ENCODE measurements at regions of chr19 and their contacts with region 1.

Region 1: GRCh38 chr19:55467236-55468053 is 2.9 kb upstream of the C19orf85 start:
- DNase-seq: peak in 1 of 2 experiments; percentile 94
- H3K4me3 ChIP-seq: no peak overlapping the region
- H3K27ac ChIP-seq: no peak overlapping the region
- H3K4me1 ChIP-seq: peaks cover 3 to 23% (median 11%) of the 10 kb centered on the region in 4 experiments
- H3K27me3 ChIP-seq: no peaks in the 10 kb centered on the region; a peak in 1 of 7 replicates
- CTCF ChIP-seq: peak; percentile 87 to 93 (median 89)
- EP300 ChIP-seq: peak in 1 of 2 experiments; percentile 63; a peak in 1 of 3 replicates
- POLR2A ChIP-seq: no peak
- RAD21 ChIP-seq: peak; percentile 56 to 73

Region 2: GRCh38 chr19:55484593-55485438 is 17.4 kb after region 1 on chr19 and contains the start of gene NAT14:
- CTCF ChIA-PET with region 1: interaction called, 31 read pairs
- POLR2A ChIA-PET with region 1: interaction called, 57 read pairs
- DNase-seq: peak; percentile 68 to 97
- H3K4me3 ChIP-seq: peak within 1 kb of the TSS; percentile 46 to 88 (median 76)
- H3K27ac ChIP-seq: peak within 1 kb of the TSS; percentile 69; the same call in 1 of the 2 replicates
- H3K4me1 ChIP-seq: peaks cover 0 to 50% (median 36%) of the 10 kb centered on the region in 4 experiments; a peak in 6 of 7 replicates
- H3K27me3 ChIP-seq: no peaks in the 10 kb centered on the region
- CTCF ChIP-seq: no peak
- EP300 ChIP-seq: peak in 1 of 2 experiments; percentile 50; a peak in 1 of 3 replicates
- POLR2A ChIP-seq: peak in 1 of 2 experiments; percentile 55; a peak in 2 of 3 replicates
- RAD21 ChIP-seq: no peak
- total RNA-seq, gene NAT14: 69.1 and 71.2 TPM in 2 replicates

Region 3: GRCh38 chr19:55494172-55494761 is 26.8 kb after region 1 on chr19:
- CTCF ChIA-PET with region 1: interaction called, 10 read pairs
- POLR2A ChIA-PET with region 1: interaction called, 57 read pairs
- DNase-seq: no peak
- H3K4me3 ChIP-seq: no peak overlapping the region
- H3K27ac ChIP-seq: no peak overlapping the region
- H3K4me1 ChIP-seq: peaks cover 0 to 14% (median 8%) of the 10 kb centered on the region in 4 experiments; a peak in 6 of 7 replicates
- H3K27me3 ChIP-seq: no peaks in the 10 kb centered on the region; a peak in 3 of 7 replicates
- CTCF ChIP-seq: no peak
- EP300 ChIP-seq: no peak
- POLR2A ChIP-seq: no peak
- RAD21 ChIP-seq: no peak

Region 4: DNA sequence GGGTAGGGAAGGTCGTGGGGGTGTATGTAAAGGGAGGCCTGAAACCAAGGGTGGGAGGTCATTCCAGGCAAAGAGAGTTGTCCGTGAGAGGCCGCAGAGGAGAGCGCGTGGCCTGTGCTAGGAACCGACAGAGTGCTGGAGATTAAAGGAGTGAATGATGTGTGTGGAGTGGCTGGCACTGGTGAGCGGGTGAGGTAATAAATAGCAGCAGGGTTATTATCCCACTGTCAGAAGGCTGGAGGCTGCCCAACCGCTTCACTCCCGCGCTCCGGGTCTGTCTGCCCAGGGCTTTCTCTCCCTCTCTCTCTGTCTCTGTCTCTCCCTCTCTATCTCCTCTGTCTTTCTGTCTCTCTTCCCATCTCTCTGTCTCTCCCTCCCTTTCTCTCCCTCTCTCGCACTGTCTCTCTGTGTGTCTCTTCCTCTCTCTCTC is 95.8 kb after region 1 on chr19:
- CTCF ChIA-PET with region 1: no interaction called
- POLR2A ChIA-PET with region 1: no interaction called
- DNase-seq: no peak
- H3K4me3 ChIP-seq: no peak overlapping the region
- H3K27ac ChIP-seq: no peak overlapping the region
- H3K4me1 ChIP-seq: no peaks in the 10 kb centered on the region
- H3K27me3 ChIP-seq: no peaks in the 10 kb centered on the region; a peak in 1 of 7 replicates
- CTCF ChIP-seq: no peak
- EP300 ChIP-seq: no peak
- POLR2A ChIP-seq: no peak
- RAD21 ChIP-seq: no peak

Region 5: GRCh38 chr19:55679343-55680257 is 212.2 kb after region 1 on chr19:
- CTCF ChIA-PET with region 1: no interaction called
- POLR2A ChIA-PET with region 1: no interaction called
- DNase-seq: no peak
- H3K4me3 ChIP-seq: no peak overlapping the region
- H3K27ac ChIP-seq: no peak overlapping the region
- H3K4me1 ChIP-seq: peaks cover 0 to 2% (median 0%) of the 10 kb centered on the region in 4 experiments; a peak in 2 of 7 replicates
- H3K27me3 ChIP-seq: no peaks in the 10 kb centered on the region
- CTCF ChIP-seq: no peak
- EP300 ChIP-seq: no peak
- POLR2A ChIP-seq: no peak
- RAD21 ChIP-seq: no peak